ENCODE measurements at regions of chr11 and their contacts with region 1.

Region 1: DNA sequence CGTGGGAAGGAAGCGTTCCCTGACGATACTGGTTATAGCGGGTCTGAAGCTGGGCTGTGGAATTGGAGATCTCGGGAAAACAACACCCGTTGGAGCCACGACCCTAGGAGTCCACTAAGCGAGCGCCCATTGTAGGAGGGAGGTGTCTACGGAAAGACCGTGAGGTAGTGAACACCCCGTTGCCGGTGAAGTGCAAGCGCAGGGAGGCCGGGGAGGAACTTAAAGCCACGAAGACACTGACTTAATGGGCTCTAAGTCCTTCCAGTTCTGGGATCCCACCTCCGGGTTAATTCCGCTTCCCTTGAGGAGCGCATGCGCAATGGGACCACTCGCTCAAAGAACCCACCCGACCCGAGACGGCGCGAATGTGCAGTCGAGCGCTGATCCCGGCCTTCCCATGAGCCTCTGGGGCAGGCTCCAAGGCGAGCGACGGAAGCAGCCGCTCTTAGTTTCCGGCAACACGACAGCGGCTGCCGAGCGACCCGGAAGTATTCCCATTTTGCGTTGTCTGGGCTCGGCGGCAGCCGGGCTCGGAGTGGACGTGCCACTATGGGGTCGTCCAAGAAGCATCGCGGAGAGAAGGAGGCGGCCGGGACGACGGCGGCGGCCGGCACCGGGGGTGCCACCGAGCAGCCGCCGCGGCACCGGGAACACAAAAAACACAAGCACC is at the start of gene SART1:
- DNase-seq: peak; percentile 99
- H3K4me3 Mint-ChIP-seq: peak within 1 kb of the TSS; percentile 90
- H3K27ac Mint-ChIP-seq: peak within 1 kb of the TSS; percentile 95
- H3K4me1 Mint-ChIP-seq: peaks cover 42% of the 10 kb centered on the region
- H3K27me3 Mint-ChIP-seq: peaks cover 1% of the 10 kb centered on the region
- total RNA-seq, gene SART1: 99.1 and 104 TPM in 2 replicates

Region 2: DNA sequence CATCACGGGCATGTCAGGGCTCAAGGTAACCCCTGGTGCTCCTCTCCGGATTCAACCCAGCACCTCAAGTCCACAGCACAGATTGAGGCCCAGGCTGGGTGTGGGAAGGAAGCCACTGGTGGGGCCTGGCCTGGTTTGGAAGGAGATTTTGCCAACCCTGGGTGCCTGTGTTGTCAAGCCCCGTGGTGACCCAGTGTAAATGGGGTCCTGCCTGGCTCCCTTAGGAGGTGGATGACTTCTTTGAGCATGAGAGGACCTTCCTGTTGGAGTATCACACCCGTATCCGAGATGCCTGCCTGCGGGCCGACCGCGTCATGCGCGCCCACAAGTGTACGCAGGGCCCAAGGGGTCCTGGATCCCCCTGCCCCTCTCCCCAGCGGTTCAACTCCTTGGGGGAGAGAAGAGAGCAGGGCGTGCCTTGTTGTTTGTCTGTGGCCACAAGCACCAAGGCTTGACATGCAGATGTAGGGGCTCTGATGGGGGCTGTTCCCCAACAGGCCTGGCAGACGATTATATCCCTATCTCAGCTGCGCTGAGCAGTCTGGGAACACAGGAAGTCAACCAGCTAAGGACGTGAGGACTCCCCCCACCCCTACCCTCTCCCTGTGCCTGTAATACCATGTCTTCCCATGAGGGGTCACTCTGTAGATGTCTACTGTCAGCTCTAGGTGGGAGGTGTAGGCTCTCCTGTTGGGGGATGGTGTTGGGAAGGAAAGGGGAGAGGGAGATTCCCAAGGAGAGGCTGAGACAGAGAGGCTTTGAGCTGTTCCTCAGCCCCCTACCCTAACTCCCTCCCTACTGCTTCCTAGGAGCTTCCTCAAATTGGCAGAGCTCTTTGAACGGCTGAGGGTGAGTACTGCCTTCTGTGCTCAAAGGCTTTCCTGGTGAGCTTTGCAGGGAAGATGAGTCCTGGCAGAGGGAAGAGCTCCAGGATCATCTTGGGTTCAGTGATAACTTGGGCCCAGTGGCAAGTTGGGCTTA is 110.2 kb before region 1 on chr11:
- intact Hi-C with region 1: no loop called
- DNase-seq: peak; percentile 73
- H3K4me3 Mint-ChIP-seq: no peak overlapping the region
- H3K27ac Mint-ChIP-seq: no peak overlapping the region
- H3K4me1 Mint-ChIP-seq: peaks cover 22% of the 10 kb centered on the region
- H3K27me3 Mint-ChIP-seq: no peaks in the 10 kb centered on the region

Region 3: GRCh38 chr11:65900125-65900898 is 61.1 kb before region 1 on chr11 and contains the start of gene FOSL1:
- intact Hi-C with region 1: loop called (anchors 2 kb)
- DNase-seq: peak; percentile 97
- H3K4me3 Mint-ChIP-seq: peak within 1 kb of the TSS; percentile 82
- H3K27ac Mint-ChIP-seq: peak within 1 kb of the TSS; percentile 78
- H3K4me1 Mint-ChIP-seq: peaks cover 37% of the 10 kb centered on the region
- H3K27me3 Mint-ChIP-seq: peaks cover 10% of the 10 kb centered on the region
- total RNA-seq, gene FOSL1: 32.1 and 32.9 TPM in 2 replicates

Region 4: GRCh38 chr11:65927904-65928397 is 33.4 kb before region 1 on chr11:
- intact Hi-C with region 1: loop called (anchors 1 kb)
- DNase-seq: peak; percentile 94
- H3K4me3 Mint-ChIP-seq: peak overlapping the region; percentile 81
- H3K27ac Mint-ChIP-seq: peak overlapping the region; percentile 97
- H3K4me1 Mint-ChIP-seq: peaks cover 42% of the 10 kb centered on the region
- H3K27me3 Mint-ChIP-seq: no peaks in the 10 kb centered on the region